Vagina (tissue), 2 donors: ENCODE measurements at regions of chr10 and their contacts with region 1.

Region 1: DNA sequence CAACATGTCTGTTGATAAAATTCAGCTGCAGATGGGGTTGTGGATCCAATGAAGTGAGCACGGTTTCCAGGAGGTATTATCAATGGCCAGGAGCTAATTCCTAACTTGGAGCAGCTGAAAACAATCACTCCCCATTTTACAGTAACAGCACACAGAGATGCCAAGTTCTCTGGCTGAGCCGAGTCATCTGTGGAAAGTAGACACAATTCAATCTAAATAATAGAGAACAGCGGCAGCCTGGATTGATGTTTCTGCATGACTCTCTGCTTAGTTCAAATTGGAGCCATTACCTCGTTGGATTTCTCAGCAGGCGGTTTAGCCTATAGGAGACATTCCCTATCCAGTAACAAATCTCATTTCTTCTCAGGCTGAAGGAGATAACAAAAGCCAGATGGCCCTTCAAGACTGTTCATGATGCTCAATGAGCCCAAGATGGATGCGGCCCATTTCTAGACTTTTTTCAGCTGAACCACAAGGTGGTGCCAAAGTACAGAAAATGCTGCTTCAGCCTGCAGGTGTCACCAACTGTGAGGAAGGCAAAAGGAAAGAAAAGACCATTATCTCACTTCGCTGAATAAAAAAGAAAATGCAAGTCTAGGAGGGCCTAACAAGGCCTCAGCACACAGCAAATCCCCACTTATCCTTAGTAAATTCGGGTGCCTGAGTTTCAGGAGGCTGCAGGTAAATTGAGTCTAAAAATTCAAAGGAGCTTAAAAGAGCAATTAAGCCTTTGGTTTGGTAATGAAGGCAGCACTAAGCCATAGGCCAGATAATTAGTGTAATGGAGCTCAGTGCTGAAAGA is 83.7 kb downstream of the SLC16A9 start:
- DNase-seq: no peak
- H3K4me3 ChIP-seq: no peak overlapping the region
- H3K27ac ChIP-seq: no peak overlapping the region
- H3K4me1 ChIP-seq: no peaks in the 10 kb centered on the region
- H3K27me3 ChIP-seq: no peaks in the 10 kb centered on the region
- CTCF ChIP-seq: peak; percentile 52 to 90 (median 80)
- POLR2A ChIP-seq: no peak

Region 2: DNA sequence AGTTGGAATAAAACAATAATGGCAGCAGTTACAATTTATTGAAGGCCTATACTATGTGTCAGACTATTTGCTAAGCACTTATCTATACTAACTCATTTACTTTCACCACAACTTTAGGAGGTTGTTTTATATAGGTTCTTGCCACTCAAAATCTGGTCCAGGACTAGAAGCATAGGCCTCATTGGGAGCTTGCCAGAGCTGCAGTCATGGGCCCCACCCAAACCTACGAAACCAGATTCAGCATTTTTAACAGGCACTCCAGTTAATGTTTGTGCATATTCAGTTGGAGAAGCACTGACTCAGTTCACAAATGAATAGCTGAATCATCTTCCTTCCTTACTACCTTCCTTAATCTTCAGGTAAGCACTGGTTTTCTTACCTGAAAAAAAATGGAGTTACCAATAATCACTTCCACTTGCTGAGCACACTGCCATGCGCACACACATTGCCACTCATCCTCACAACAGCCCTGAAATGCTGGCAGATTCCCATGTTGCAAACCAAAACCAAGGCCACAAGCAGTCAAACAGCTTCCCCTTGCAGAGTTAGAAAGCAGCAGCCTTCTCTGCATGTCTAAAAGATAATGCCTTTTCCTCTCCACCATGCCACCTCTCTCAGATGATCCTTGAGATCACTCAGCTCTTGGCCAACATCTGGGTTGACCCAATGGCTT is 38.7 kb before region 1 on chr10:
- intact Hi-C with region 1: no loop called
- DNase-seq: no peak
- H3K4me3 ChIP-seq: no peak overlapping the region
- H3K27ac ChIP-seq: peak overlapping the region; percentile 64
- H3K4me1 ChIP-seq: peaks cover 50% of the 10 kb centered on the region
- H3K27me3 ChIP-seq: no peaks in the 10 kb centered on the region
- CTCF ChIP-seq: no peak
- POLR2A ChIP-seq: no peak

Region 3: GRCh38 chr10:59808896-59809643 is 183.1 kb after region 1 on chr10:
- intact Hi-C with region 1: loop called (anchors 10 kb)
- DNase-seq: no peak
- H3K4me3 ChIP-seq: no peak overlapping the region
- H3K27ac ChIP-seq: peak overlapping the region; percentile 1
- H3K4me1 ChIP-seq: peaks cover 20% of the 10 kb centered on the region
- H3K27me3 ChIP-seq: no peaks in the 10 kb centered on the region
- CTCF ChIP-seq: peak; percentile 38 to 65 (median 49)
- POLR2A ChIP-seq: no peak

Region 4: GRCh38 chr10:59830601-59831259 is 204.8 kb after region 1 on chr10:
- intact Hi-C with region 1: loop called (anchors 10 kb)
- DNase-seq: no peak
- H3K4me3 ChIP-seq: no peak overlapping the region
- H3K27ac ChIP-seq: no peak overlapping the region
- H3K4me1 ChIP-seq: peaks cover 23% of the 10 kb centered on the region
- H3K27me3 ChIP-seq: no peaks in the 10 kb centered on the region
- CTCF ChIP-seq: peak; percentile 36 to 65 (median 50)
- POLR2A ChIP-seq: no peak

Region 5: GRCh38 chr10:60008816-60009215 is 382.9 kb after region 1 on chr10:
- intact Hi-C with region 1: no loop called
- DNase-seq: no peak
- H3K4me3 ChIP-seq: no peak overlapping the region
- H3K27ac ChIP-seq: no peak overlapping the region
- H3K4me1 ChIP-seq: peaks cover 11% of the 10 kb centered on the region
- H3K27me3 ChIP-seq: no peaks in the 10 kb centered on the region
- CTCF ChIP-seq: no peak
- POLR2A ChIP-seq: no peak

Region 6: GRCh38 chr10:60048091-60048501 is 422.2 kb after region 1 on chr10:
- intact Hi-C with region 1: loop called (anchors 10 kb)
- DNase-seq: no peak
- H3K4me3 ChIP-seq: no peak overlapping the region
- H3K27ac ChIP-seq: no peak overlapping the region
- H3K4me1 ChIP-seq: no peaks in the 10 kb centered on the region
- H3K27me3 ChIP-seq: no peaks in the 10 kb centered on the region
- CTCF ChIP-seq: no peak
- POLR2A ChIP-seq: no peak